ENCODE measurements at regions of chr3 and their contacts with region 1.

Region 1: GRCh38 chr3:66138336-66139313 is 82.2 kb upstream of the SLC25A26 start:
- DNase-seq: peak; percentile 46
- ATAC-seq: peak; percentile 92

Region 2: DNA sequence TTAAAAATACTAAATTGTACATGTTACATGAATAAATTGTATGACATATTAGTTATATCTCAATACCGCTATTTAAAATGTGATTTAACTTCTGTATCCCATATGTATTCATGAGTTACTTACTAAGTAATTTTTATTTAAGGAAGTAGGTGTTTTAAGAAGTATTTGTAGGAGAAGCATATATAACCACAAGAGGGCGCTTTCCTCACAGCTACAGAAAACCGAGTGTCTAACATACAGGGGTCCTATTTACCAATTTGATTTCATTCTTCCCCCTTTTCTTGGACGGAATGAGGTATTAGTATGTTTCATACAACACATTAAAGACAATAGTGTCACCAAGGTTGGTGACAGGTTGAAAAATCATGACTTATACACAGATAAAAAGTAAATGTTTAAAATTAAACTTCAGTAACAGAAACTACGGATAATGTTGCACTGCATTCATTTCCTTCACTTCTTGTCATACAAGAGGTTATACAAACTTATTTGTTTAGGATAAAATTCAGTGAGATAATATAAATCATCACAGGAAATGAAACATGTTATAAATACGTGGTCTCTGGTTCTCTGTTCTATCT is 353.5 kb before region 1 on chr3:
- intact Hi-C with region 1: loop called (anchors 5 kb)
- DNase-seq: no peak
- ATAC-seq: peak; percentile 59

Region 3: GRCh38 chr3:65833761-65834505 is 304.7 kb before region 1 on chr3:
- intact Hi-C with region 1: no loop called
- DNase-seq: no peak
- ATAC-seq: no peak

Measured in Right ventricle myocardium superior (tissue), 1 donor.